CD4-positive, alpha-beta memory T cell (primary cell): ENCODE measurements at regions of chr7 and their contacts with region 1.

Region 1: GRCh38 chr7:149071641-149072437 is 18.7 kb downstream of the ZNF786 start:
- DNase-seq: peak in 4 of 5 donors; percentile 46 to 60 (median 55)
- H3K4me3 ChIP-seq: no peak overlapping the region
- H3K4me3 Mint-ChIP-seq: peak overlapping the region in 4 of 8 donors; percentile 8 to 55 (median 46)
- H3K27ac ChIP-seq: peak overlapping the region; percentile 31
- H3K27ac Mint-ChIP-seq: peak overlapping the region; percentile 36 to 83 (median 72)
- H3K4me1 ChIP-seq: peaks cover 4% of the 10 kb centered on the region
- H3K4me1 Mint-ChIP-seq: peaks cover 4 to 19% (median 6%) of the 10 kb centered on the region in 4 donors
- H3K27me3 ChIP-seq: no peaks in the 10 kb centered on the region
- H3K27me3 Mint-ChIP-seq: no peaks in the 10 kb centered on the region

Region 2: DNA sequence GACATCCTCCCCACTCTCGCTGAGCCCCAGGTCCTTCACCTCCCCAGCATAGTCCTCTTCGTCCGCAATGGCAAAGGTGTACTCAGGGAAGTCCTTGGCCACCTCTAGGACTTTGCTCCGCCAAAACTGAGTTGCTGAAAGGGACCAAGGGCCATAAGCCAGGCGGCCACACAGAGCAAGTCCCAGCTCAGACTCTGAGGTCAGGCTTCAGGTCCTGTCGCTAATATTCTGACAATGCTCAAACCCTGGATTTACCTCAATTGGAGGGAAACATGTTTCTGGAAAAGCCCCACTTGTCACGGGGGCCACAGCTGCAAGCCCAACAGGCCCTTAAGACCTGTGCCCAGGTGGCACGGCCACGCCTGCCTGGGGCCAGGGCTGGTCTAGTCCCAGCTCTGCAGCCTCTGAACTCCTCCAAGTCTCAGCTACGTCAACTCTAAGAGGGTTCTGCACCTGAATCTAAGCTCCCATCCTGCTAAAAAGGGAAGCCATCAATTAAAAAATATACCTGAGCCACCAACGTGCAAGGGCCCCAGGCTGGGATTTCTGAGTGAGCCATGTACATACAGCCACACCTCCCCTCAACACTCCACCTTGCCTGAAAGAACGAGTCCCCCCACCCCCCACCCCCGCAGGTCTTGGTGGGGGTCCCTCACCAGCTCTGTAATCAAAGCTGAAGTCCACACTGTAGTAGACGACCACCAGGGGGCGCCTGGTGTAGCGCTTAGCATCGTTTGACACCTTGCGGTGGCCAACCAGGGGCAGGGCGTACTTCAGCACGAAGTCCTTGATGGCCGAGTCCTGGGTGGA is 66.4 kb before region 1 on chr7:
- CTCF ChIA-PET with region 1: interaction called, 145 read pairs
- POLR2A ChIA-PET with region 1: interaction called, 26 read pairs
- intact Hi-C with region 1: no loop called
- DNase-seq: peak; percentile 71 to 79 (median 73)
- H3K4me3 ChIP-seq: no peak overlapping the region
- H3K4me3 Mint-ChIP-seq: no peak overlapping the region
- H3K27ac ChIP-seq: no peak overlapping the region
- H3K27ac Mint-ChIP-seq: peak overlapping the region in 5 of 7 donors; percentile 46 to 87 (median 62)
- H3K4me1 ChIP-seq: peaks cover 4% of the 10 kb centered on the region
- H3K4me1 Mint-ChIP-seq: peaks cover 3 to 4% (median 4%) of the 10 kb centered on the region in 4 donors
- H3K27me3 ChIP-seq: no peaks in the 10 kb centered on the region
- H3K27me3 Mint-ChIP-seq: no peaks in the 10 kb centered on the region

Region 3: GRCh38 chr7:149010451-149011010 is 61.3 kb before region 1 on chr7:
- CTCF ChIA-PET with region 1: interaction called, 145 read pairs
- POLR2A ChIA-PET with region 1: interaction called, 26 read pairs
- intact Hi-C with region 1: no loop called
- DNase-seq: no peak
- H3K4me3 ChIP-seq: no peak overlapping the region
- H3K4me3 Mint-ChIP-seq: no peak overlapping the region
- H3K27ac ChIP-seq: no peak overlapping the region
- H3K27ac Mint-ChIP-seq: peak overlapping the region in 1 of 7 donors; percentile 44
- H3K4me1 ChIP-seq: peaks cover 4% of the 10 kb centered on the region
- H3K4me1 Mint-ChIP-seq: peaks cover 4 to 10% (median 7%) of the 10 kb centered on the region in 4 donors
- H3K27me3 ChIP-seq: no peaks in the 10 kb centered on the region
- H3K27me3 Mint-ChIP-seq: no peaks in the 10 kb centered on the region

Region 4: GRCh38 chr7:149021725-149022062 is 50.1 kb before region 1 on chr7:
- CTCF ChIA-PET with region 1: interaction called, 11 read pairs
- POLR2A ChIA-PET with region 1: no interaction called
- intact Hi-C with region 1: no loop called
- DNase-seq: no peak
- H3K4me3 ChIP-seq: no peak overlapping the region
- H3K4me3 Mint-ChIP-seq: no peak overlapping the region
- H3K27ac ChIP-seq: no peak overlapping the region
- H3K27ac Mint-ChIP-seq: peak overlapping the region in 4 of 7 donors; percentile 30 to 84 (median 49)
- H3K4me1 ChIP-seq: peaks cover 16% of the 10 kb centered on the region
- H3K4me1 Mint-ChIP-seq: peaks cover 29 to 44% (median 37%) of the 10 kb centered on the region in 4 donors
- H3K27me3 ChIP-seq: no peaks in the 10 kb centered on the region
- H3K27me3 Mint-ChIP-seq: no peaks in the 10 kb centered on the region

Region 5: GRCh38 chr7:149081914-149082313 is 10.1 kb after region 1 on chr7:
- CTCF ChIA-PET with region 1: interaction called, 28 read pairs
- POLR2A ChIA-PET with region 1: no interaction called
- intact Hi-C with region 1: no loop called
- DNase-seq: no peak
- H3K4me3 ChIP-seq: no peak overlapping the region
- H3K4me3 Mint-ChIP-seq: no peak overlapping the region
- H3K27ac ChIP-seq: no peak overlapping the region
- H3K27ac Mint-ChIP-seq: peak overlapping the region in 2 of 7 donors; percentile 8 to 42
- H3K4me1 ChIP-seq: no peaks in the 10 kb centered on the region
- H3K4me1 Mint-ChIP-seq: peaks cover 4 to 16% (median 10%) of the 10 kb centered on the region in 4 donors
- H3K27me3 ChIP-seq: no peaks in the 10 kb centered on the region
- H3K27me3 Mint-ChIP-seq: no peaks in the 10 kb centered on the region

Region 6: DNA sequence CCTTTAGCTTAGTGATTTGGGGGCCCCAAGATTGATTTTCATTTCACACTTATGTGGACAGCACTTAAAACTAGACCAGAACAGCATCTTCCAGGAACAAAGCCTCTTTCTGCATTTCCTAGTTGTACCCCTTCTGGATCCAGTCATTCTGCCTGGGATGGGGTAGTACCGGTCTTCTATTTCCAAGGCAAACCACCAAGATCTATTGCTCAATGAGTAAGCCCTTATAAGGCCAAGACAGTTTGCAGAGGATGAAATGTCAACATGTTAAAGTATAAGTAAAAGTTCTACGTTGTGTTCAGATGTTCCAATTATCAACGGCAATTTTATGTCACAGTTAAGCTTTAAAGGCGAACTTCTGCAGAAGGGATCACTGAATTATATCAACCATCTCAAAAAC is 532.7 kb after region 1 on chr7:
- CTCF ChIA-PET with region 1: no interaction called
- POLR2A ChIA-PET with region 1: no interaction called
- intact Hi-C with region 1: no loop called
- DNase-seq: no peak
- H3K4me3 ChIP-seq: no peak overlapping the region
- H3K4me3 Mint-ChIP-seq: no peak overlapping the region
- H3K27ac ChIP-seq: no peak overlapping the region
- H3K27ac Mint-ChIP-seq: peak overlapping the region in 1 of 7 donors; percentile 3
- H3K4me1 ChIP-seq: peaks cover 18% of the 10 kb centered on the region
- H3K4me1 Mint-ChIP-seq: peaks cover 20 to 39% (median 24%) of the 10 kb centered on the region in 4 donors
- H3K27me3 ChIP-seq: no peaks in the 10 kb centered on the region
- H3K27me3 Mint-ChIP-seq: no peaks in the 10 kb centered on the region